Calu3 (cell line): ENCODE measurements at regions of chr12 and their contacts with region 1.

Region 1: DNA sequence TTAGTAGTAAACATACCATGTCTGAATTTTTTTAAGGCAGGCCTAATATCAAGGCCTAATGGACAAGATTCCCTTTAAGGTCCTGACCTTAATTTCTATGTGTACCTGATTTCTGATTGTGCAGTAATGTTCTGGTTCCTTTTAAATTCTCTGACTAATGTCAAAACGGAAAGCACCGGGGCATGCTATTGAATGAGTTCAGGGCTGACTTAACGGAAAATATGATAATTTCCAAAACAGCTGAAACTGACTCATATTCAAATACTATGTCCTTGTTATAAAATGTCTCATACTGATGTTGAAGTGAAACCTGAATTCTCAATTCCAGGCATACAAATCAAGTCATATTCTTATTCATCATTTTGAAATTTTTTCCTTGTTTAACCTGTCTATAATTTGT is 6.7 kb downstream of the TAS2R43 start:
- DNase-seq: no peak
- H3K4me3 Mint-ChIP-seq: no peak overlapping the region
- H3K27ac Mint-ChIP-seq: no peak overlapping the region
- H3K4me1 Mint-ChIP-seq: no peaks in the 10 kb centered on the region
- H3K27me3 Mint-ChIP-seq: no peaks in the 10 kb centered on the region
- CTCF ChIP-seq: no peak

Region 2: GRCh38 chr12:11039171-11039570 is 46.2 kb before region 1 on chr12:
- CTCF ChIA-PET with region 1: no interaction called
- intact Hi-C with region 1: loop called (anchors 5 kb)
- DNase-seq: no peak
- H3K4me3 Mint-ChIP-seq: no peak overlapping the region
- H3K27ac Mint-ChIP-seq: no peak overlapping the region
- H3K4me1 Mint-ChIP-seq: no peaks in the 10 kb centered on the region
- H3K27me3 Mint-ChIP-seq: no peaks in the 10 kb centered on the region
- CTCF ChIP-seq: no peak

Region 3: DNA sequence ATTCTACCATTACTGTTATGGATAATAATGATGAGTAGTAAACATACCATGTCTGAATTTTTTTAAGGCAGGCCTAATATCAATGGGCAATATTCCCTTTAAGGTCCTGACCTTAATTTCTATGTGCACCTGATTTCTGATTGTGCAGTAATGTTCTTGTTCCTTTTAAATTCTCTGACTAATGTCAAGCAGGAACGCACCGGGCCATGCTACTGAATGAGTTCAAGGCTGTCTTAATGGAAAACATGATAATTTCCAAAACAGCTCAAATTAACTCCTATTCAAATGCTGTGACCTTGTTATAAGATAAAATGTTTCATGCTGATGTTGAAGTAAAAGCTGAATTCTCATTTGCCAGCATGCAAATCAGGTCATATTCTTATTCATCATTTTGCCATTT is 30.1 kb before region 1 on chr12:
- CTCF ChIA-PET with region 1: no interaction called
- intact Hi-C with region 1: loop called (anchors 2 kb)
- DNase-seq: no peak
- H3K4me3 Mint-ChIP-seq: no peak overlapping the region
- H3K27ac Mint-ChIP-seq: no peak overlapping the region
- H3K4me1 Mint-ChIP-seq: peaks cover 10% of the 10 kb centered on the region
- H3K27me3 Mint-ChIP-seq: no peaks in the 10 kb centered on the region
- CTCF ChIP-seq: no peak

Region 4: DNA sequence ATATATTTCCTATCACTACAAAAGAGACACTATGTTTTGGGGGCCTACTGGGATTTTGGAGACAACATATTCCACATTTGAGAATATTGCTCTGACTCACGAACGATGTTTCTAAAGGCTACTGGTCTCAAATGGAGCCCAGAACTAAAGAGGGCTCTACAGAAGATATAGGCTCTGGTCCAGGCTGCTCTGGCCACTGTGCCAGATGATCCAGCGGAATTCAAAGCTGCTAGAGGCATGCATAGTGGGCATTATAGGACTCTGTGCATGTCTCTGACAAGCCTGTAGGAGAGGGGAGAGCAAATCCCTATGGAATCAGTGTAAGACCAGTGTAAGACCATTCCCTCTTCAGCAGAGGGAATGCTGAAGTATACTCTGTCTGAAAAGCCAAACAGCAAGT is 45.0 kb after region 1 on chr12:
- CTCF ChIA-PET with region 1: no interaction called
- intact Hi-C with region 1: loop called (anchors 1 kb)
- DNase-seq: no peak
- H3K4me3 Mint-ChIP-seq: no peak overlapping the region
- H3K27ac Mint-ChIP-seq: no peak overlapping the region
- H3K4me1 Mint-ChIP-seq: peaks cover 13% of the 10 kb centered on the region
- H3K27me3 Mint-ChIP-seq: no peaks in the 10 kb centered on the region
- CTCF ChIP-seq: no peak